ENCODE measurements at regions of chr4 and their contacts with region 1.

Region 1: GRCh38 chr4:159206427-159206871 is 103.6 kb downstream of the RAPGEF2 start:
- ATAC-seq: no peak
- H3K4me3 ChIP-seq: no peak overlapping the region
- H3K27ac ChIP-seq: no peak overlapping the region
- H3K4me1 ChIP-seq: no peaks in the 10 kb centered on the region

Region 2: GRCh38 chr4:159446266-159446976 is 240.0 kb after region 1 on chr4:
- in situ Hi-C with region 1: loop called in 2 of 9 experiments (anchors 10 to 25 kb)
- ATAC-seq: peak; percentile 98 to 100 (median 100)
- H3K4me3 ChIP-seq: no peak overlapping the region
- H3K27ac ChIP-seq: no peak overlapping the region
- H3K4me1 ChIP-seq: peaks cover 0 to 8% of the 10 kb centered on the region in 2 donors

Measured in motor neuron (in vitro differentiated cells).